Heart right ventricle (tissue), 16 donors: ENCODE measurements at regions of chr20 and their contacts with region 1.

Region 1: DNA sequence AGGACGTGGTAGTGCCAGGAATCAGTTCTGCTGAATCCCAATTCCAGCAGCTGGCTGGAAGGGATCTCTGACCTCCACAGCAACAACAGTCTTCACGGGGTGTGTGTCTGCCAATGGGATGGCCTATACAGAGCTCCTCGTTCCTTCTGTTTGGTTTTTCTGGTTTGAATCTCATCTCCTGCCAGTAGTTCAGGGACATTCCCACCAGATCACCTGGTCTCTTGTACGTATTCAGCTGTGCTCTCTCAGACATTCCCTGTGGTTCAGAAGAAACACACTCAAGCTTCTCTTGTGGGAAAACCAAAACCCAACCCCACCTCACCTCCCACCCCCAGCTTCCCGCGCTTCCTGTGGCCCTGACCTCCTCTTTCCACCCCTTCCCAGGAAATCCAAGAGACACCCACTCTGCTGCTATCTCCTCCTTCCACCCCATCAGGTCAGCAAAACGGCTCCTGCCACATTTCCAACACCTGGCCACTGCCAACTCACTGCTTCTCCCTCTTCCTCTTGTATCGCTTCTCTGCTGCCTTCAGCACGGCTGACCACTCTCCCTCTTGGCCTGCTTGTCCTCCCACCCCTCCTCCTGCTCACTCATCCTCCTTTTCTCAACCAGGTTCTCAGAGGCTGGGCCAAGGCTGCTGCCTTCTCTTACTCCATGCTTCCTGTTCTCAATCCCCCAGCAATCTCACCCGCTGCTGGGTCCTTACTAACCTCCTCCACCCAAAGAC is 63.3 kb upstream of the PTGIS start:
- DNase-seq: no peak
- ATAC-seq: peak in 5 of 8 donors; percentile 10 to 42 (median 24)
- H3K4me3 ChIP-seq: no peak overlapping the region
- H3K27ac ChIP-seq: peak overlapping the region in 6 of 10 donors; percentile 16 to 70 (median 56)
- H3K4me1 ChIP-seq: peaks cover 0 to 42% (median 22%) of the 10 kb centered on the region in 9 donors
- H3K27me3 ChIP-seq: no peaks in the 10 kb centered on the region
- CTCF ChIP-seq: no peak

Region 2: DNA sequence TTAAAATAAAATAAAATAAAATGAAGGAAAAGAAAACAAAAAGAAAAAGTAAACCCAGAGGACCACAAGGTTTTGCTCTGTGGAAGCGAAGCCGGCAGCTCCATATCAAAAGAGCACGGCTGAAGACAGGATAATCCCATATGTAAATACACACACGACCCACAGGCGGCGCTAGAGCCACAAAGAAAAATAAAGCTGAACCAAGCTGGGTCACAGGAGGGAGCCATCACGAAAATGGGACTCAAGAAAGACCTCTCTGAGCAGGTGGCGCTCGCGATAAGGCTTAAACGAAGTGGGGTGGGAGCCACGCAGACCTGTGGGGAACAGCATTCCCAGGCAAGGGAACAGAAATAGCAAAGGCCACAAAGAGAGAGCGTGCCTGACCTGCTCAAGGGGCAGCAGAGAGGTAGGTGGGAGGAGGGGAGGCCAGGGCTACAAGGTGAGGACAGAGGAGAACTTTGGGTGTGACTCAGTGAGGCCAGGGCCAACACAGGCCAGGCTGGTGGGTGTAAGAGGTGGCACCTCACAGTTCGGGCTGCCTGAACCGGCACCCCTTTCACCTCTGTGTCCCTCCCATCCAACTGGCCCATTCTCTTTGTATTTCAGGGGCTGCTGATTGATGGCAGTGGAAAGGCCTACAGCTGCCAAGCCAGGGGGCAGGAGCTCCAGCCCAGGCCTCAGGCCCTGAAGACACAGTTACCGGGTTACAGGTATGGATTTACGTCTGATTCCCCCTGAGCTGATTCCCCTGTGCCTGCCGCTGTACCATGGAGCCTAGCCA is 89.3 kb before region 1 on chr20:
- intact Hi-C with region 1: no loop called
- DNase-seq: peak; percentile 61 to 68
- ATAC-seq: peak in 7 of 8 donors; percentile 60 to 82 (median 75)
- H3K4me3 ChIP-seq: no peak overlapping the region
- H3K27ac ChIP-seq: peak overlapping the region in 4 of 10 donors; percentile 12 to 35 (median 32)
- H3K4me1 ChIP-seq: peaks cover 0 to 4% (median 0%) of the 10 kb centered on the region in 9 donors
- H3K27me3 ChIP-seq: no peaks in the 10 kb centered on the region
- CTCF ChIP-seq: peak; percentile 60 to 87 (median 80)

Region 3: DNA sequence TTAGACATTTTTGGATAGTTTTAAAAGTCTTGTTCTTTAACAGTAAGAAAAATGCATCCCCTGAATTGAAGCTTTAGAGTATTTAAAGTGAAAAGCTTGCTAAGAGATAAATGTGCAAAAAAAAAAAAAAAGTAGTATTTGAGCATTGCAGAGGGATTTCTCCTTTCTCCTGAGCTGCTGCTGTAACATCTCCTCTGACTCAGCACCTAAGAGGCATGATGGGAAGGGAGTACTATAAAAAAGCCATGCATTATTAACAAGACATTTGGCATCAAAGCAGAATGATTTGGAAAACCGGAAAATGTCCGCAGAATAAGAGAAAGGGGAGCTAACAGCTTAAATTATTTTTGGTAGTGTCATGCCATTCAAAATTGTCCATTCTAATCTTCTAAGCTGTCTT is 54.6 kb after region 1 on chr20:
- intact Hi-C with region 1: loop called in 1 of 10 experiments (anchors 10 kb)
- DNase-seq: no peak
- ATAC-seq: peak in 4 of 8 donors; percentile 42 to 62 (median 50)
- H3K4me3 ChIP-seq: no peak overlapping the region
- H3K27ac ChIP-seq: peak overlapping the region in 6 of 10 donors; percentile 12 to 76 (median 16)
- H3K4me1 ChIP-seq: peaks cover 14 to 92% (median 41%) of the 10 kb centered on the region in 9 donors
- H3K27me3 ChIP-seq: no peaks in the 10 kb centered on the region
- CTCF ChIP-seq: no peak

Region 4: DNA sequence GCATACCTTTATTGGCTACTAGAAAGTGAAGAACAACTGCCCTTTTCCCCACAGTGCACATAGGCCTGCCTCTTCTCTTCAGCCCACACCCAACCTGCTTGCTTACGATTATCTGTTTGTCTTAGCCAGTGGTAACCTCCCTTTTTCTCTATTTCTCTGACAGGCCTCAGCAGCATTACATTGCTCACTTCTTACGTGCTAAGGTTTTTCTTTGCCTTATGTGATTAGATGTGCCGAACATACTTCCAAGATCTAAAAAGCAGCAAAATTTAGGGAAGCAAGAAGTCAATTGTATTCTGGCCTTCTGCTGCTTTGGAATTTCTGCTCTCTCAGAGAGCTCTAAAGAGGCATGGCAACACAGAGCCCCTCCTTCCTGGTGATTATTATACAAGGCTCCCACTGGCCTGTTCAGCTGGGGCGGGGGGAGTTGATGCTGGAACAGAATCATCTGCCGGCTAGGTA is 75.4 kb after region 1 on chr20:
- intact Hi-C with region 1: loop called in 5 of 10 experiments (anchors 5 to 10 kb)
- DNase-seq: no peak
- ATAC-seq: peak in 4 of 8 donors; percentile 31 to 61 (median 48)
- H3K4me3 ChIP-seq: no peak overlapping the region
- H3K27ac ChIP-seq: peak overlapping the region in 7 of 10 donors; percentile 11 to 69 (median 45)
- H3K4me1 ChIP-seq: peaks cover 4 to 91% (median 56%) of the 10 kb centered on the region in 9 donors
- H3K27me3 ChIP-seq: no peaks in the 10 kb centered on the region
- CTCF ChIP-seq: no peak

Region 5: GRCh38 chr20:49713753-49714712 is 82.8 kb after region 1 on chr20 and contains the start of gene B4GALT5:
- intact Hi-C with region 1: loop called in 5 of 10 experiments (anchors 5 to 10 kb)
- DNase-seq: peak; percentile 72 to 76
- ATAC-seq: peak; percentile 82 to 93 (median 89)
- H3K4me3 ChIP-seq: peak within 1 kb of the TSS; percentile 79 to 99 (median 98)
- H3K27ac ChIP-seq: peak within 1 kb of the TSS; percentile 88 to 99 (median 96)
- H3K4me1 ChIP-seq: peaks cover 0 to 55% (median 42%) of the 10 kb centered on the region in 9 donors
- H3K27me3 ChIP-seq: no peaks in the 10 kb centered on the region
- CTCF ChIP-seq: no peak
- total RNA-seq, gene B4GALT5: 24.4 to 61.6 (median 34.3) TPM